ENCODE measurements at regions of chr16 and their contacts with region 1.

Region 1: GRCh38 chr16:47110939-47111338 is 32.8 kb downstream of the NETO2 start:
- DNase-seq: no peak
- H3K4me3 Mint-ChIP-seq: no peak overlapping the region
- H3K27ac Mint-ChIP-seq: no peak overlapping the region
- H3K4me1 Mint-ChIP-seq: peaks cover 19% of the 10 kb centered on the region
- H3K27me3 Mint-ChIP-seq: no peaks in the 10 kb centered on the region

Region 2: GRCh38 chr16:46822270-46822669 is 288.7 kb before region 1 on chr16:
- CTCF ChIA-PET with region 1: no interaction called
- intact Hi-C with region 1: loop called (anchors 5 kb)
- DNase-seq: peak; percentile 74
- H3K4me3 Mint-ChIP-seq: no peak overlapping the region
- H3K27ac Mint-ChIP-seq: no peak overlapping the region
- H3K4me1 Mint-ChIP-seq: peaks cover 30% of the 10 kb centered on the region
- H3K27me3 Mint-ChIP-seq: no peaks in the 10 kb centered on the region

Region 3: DNA sequence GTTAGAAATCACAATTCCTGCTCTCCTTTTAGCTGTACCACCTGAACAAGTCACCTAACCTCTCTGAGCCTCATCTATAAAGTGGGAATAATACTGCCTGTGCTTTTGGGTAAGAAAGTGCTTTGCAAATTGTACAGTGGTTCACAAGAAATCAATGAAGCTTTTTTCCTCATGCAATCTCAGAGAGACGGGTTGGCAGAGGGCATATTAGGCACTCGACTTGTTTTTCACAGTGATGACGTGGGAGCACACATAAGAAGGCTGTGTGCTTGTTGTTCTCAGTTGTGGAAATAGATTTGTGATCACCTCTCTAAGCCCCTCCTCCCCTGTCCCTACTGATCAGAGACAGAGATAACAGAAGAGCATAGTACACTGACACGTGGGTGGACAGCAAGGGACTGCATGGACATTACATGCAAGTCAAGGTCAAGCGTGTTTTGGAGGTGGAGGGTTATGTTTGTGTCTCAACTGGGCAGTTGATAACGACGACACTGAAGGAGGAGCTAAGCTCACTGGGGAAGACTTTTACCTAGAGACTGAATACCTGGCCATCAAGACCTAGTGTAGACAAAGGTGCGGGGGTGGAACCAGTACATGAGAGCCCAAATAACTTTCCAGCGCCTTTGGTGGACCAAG is 228.5 kb before region 1 on chr16:
- CTCF ChIA-PET with region 1: no interaction called
- intact Hi-C with region 1: no loop called
- DNase-seq: no peak
- H3K4me3 Mint-ChIP-seq: no peak overlapping the region
- H3K27ac Mint-ChIP-seq: no peak overlapping the region
- H3K4me1 Mint-ChIP-seq: peaks cover 9% of the 10 kb centered on the region
- H3K27me3 Mint-ChIP-seq: peaks cover 19% of the 10 kb centered on the region

Region 4: GRCh38 chr16:46908540-46909372 is 202.2 kb before region 1 on chr16:
- CTCF ChIA-PET with region 1: no interaction called
- intact Hi-C with region 1: no loop called
- DNase-seq: peak; percentile 72
- H3K4me3 Mint-ChIP-seq: no peak overlapping the region
- H3K27ac Mint-ChIP-seq: no peak overlapping the region
- H3K4me1 Mint-ChIP-seq: peaks cover 10% of the 10 kb centered on the region
- H3K27me3 Mint-ChIP-seq: no peaks in the 10 kb centered on the region

Region 5: DNA sequence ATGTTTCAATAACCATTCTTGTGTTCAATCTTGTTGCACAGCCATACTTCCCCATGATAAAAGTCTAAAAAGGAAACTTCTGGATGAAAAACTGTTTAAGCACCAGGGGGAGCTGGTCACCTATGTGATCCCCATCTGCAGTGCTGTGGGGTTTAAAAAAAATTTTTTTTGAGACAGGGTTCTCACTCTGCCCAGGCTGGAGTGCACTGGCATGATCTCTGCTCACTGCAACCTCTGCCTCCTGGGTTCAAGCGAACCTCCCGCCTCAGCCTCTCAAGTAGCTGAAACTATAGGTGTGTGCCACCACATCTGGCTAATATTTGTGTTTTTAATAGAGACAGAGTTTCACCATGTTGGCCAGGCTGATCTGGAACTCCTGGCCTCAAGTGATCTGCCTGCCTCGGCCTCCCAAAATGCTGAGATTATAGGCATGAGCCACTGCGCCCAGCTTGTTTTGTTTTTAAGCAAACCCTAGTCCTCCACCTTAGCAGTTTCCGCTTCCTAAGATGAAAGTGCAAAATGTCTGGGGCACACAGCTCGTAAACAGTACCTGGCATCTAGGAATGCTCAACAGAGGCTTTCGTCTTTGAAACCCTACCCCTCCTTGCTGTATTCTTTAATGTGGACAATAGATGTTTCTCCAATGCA is 162.9 kb before region 1 on chr16:
- CTCF ChIA-PET with region 1: no interaction called
- intact Hi-C with region 1: loop called (anchors 1 kb)
- DNase-seq: peak; percentile 63
- H3K4me3 Mint-ChIP-seq: no peak overlapping the region
- H3K27ac Mint-ChIP-seq: no peak overlapping the region
- H3K4me1 Mint-ChIP-seq: peaks cover 14% of the 10 kb centered on the region
- H3K27me3 Mint-ChIP-seq: no peaks in the 10 kb centered on the region

Region 6: GRCh38 chr16:47037746-47038458 is 73.0 kb before region 1 on chr16:
- CTCF ChIA-PET with region 1: interaction called, 7 read pairs
- intact Hi-C with region 1: loop called (anchors 2 kb)
- DNase-seq: peak; percentile 91
- H3K4me3 Mint-ChIP-seq: peak overlapping the region; percentile 74
- H3K27ac Mint-ChIP-seq: no peak overlapping the region
- H3K4me1 Mint-ChIP-seq: peaks cover 8% of the 10 kb centered on the region
- H3K27me3 Mint-ChIP-seq: peaks cover 10% of the 10 kb centered on the region

Region 7: DNA sequence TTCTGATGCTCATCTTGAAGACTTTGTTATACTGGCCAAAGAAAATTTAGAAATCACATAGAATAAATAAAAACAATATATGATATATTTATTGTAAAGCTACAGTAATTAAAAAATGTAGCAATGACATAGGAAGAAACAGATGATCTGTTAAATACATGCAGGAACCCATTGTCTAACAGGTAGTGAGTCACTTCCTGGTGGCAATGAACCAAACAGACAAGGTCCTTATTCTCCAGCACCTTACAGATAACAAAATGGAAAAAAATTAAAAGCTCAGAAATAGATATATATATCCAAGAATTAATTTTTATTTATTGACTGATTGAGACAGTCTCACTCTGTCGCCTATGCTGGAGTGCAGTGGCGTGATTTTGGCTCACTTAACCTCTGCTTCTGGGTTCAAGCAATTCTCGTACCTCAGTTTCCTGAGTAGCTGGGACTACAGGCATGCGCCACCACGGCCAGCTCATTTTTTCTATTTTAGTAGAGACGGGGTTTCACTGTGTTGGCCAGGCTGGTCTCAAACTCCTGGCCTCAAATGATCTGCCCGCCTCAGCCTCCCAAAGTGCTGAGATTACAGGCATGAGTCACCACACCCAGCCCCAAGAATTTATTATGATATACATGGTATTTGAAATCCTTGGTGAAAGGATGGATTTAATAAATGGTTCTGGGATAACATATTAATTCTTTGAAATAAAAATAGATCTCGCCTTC is 25.3 kb after region 1 on chr16:
- CTCF ChIA-PET with region 1: interaction called, 8 read pairs
- intact Hi-C with region 1: loop called (anchors 1 kb)
- DNase-seq: no peak
- H3K4me3 Mint-ChIP-seq: no peak overlapping the region
- H3K27ac Mint-ChIP-seq: no peak overlapping the region
- H3K4me1 Mint-ChIP-seq: peaks cover 6% of the 10 kb centered on the region
- H3K27me3 Mint-ChIP-seq: peaks cover 11% of the 10 kb centered on the region

Region 8: DNA sequence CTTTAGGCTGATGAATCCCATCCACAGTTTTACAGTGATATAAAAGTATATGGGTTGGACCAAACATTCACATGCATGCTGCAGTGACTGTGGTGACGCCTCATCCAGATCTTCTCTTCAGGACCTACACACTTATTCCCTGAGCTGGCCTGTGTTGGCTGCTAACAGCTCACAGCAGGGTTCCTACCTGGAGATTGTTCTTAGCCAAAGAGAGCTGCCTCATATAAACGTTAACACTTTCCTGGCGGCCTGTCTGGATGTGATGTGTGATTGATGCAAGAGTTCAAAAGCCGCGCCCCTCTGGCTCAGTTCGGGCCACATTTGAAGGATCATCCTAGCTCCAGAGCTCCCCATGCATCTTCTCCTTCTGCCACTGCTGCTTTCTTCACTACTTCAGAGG is 125.8 kb after region 1 on chr16:
- CTCF ChIA-PET with region 1: no interaction called
- intact Hi-C with region 1: no loop called
- DNase-seq: no peak
- H3K4me3 Mint-ChIP-seq: no peak overlapping the region
- H3K27ac Mint-ChIP-seq: no peak overlapping the region
- H3K4me1 Mint-ChIP-seq: no peaks in the 10 kb centered on the region
- H3K27me3 Mint-ChIP-seq: no peaks in the 10 kb centered on the region

Region 9: GRCh38 chr16:48459167-48459566 is 1348.2 kb after region 1 on chr16:
- CTCF ChIA-PET with region 1: no interaction called
- intact Hi-C with region 1: loop called (anchors 2 kb)
- DNase-seq: no peak
- H3K4me3 Mint-ChIP-seq: no peak overlapping the region
- H3K27ac Mint-ChIP-seq: no peak overlapping the region
- H3K4me1 Mint-ChIP-seq: peaks cover 20% of the 10 kb centered on the region
- H3K27me3 Mint-ChIP-seq: peaks cover 24% of the 10 kb centered on the region